ENCODE measurements at regions of chr19 and their contacts with region 1.

Region 1: GRCh38 chr19:53057904-53058580 is 13.5 kb downstream of the ERVV-2 start:
- DNase-seq: peak; percentile 11 to 35
- ATAC-seq: peak; percentile 57 to 88 (median 78)
- H3K4me3 ChIP-seq: peak overlapping the region in 9 of 10 donors; percentile 18 to 45 (median 34)
- H3K27ac ChIP-seq: no peak overlapping the region
- H3K4me1 ChIP-seq: peaks cover 0 to 13% (median 6%) of the 10 kb centered on the region in 9 donors
- H3K27me3 ChIP-seq: peaks cover 0 to 16% (median 0%) of the 10 kb centered on the region in 7 donors
- CTCF ChIP-seq: no peak

Region 2: DNA sequence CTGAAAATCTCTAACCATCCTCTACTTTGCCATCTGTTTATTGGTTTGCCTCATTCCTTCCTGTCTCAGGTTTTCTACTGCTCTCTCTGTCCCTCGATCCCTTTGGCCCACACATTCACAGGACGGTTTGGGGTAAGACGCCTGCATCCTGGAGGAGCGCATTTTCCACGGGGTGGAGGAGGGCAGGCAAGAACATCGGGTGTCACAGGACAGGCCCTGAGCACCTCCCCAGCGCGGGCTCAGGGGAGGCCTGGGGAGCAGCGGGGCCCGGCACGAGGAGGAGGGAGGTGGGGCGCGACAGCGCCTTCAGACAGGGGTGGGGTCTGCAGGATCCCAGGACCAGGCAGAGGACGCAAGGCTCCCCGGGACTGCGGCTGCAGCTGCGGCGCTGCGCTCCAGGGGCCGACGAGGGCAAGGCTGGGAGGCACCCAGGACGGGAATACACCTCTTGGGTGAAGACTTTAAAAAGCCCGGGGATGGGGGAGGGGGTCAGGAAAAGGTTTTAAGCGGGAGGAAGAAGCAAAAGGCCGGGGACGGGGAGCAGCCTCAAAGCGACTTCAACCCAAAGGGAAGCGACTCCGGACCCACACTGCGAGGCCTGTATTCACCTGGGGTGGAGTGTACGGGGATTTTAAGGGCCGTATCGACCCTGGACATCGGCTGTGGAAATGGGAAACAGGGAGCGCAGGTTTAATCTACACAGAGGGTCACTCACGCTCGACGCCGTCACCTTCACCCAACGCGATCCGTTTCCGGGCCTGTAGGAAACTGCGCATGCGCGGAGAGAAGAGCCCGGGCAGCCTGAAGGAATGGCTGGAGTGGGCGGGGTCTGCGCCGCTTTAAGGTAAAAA is 74.3 kb after region 1 on chr19 and contains the start of gene ZNF415:
- intact Hi-C with region 1: no loop called
- DNase-seq: peak; percentile 87 to 89
- ATAC-seq: peak; percentile 90 to 96 (median 95)
- H3K4me3 ChIP-seq: peak within 1 kb of the TSS; percentile 44 to 75 (median 66)
- H3K27ac ChIP-seq: peak within 1 kb of the TSS; percentile 34 to 92 (median 86)
- H3K4me1 ChIP-seq: peaks cover 9 to 29% (median 22%) of the 10 kb centered on the region in 9 donors
- H3K27me3 ChIP-seq: peaks cover 0 to 3% (median 0%) of the 10 kb centered on the region in 7 donors
- CTCF ChIP-seq: no peak
- total RNA-seq, gene ZNF415: 18.7 to 32.5 (median 22.8) TPM

Region 3: GRCh38 chr19:54014920-54015560 is 957.0 kb after region 1 on chr19:
- intact Hi-C with region 1: loop called in 1 of 10 experiments (anchors 5 kb)
- DNase-seq: no peak
- ATAC-seq: no peak
- H3K4me3 ChIP-seq: no peak overlapping the region
- H3K27ac ChIP-seq: no peak overlapping the region
- H3K4me1 ChIP-seq: peaks cover 0 to 13% (median 0%) of the 10 kb centered on the region in 9 donors
- H3K27me3 ChIP-seq: peaks cover 2 to 68% (median 60%) of the 10 kb centered on the region in 7 donors
- CTCF ChIP-seq: no peak

Measured in heart right ventricle (tissue), 16 donors.